ENCODE measurements at regions of chr9 and their contacts with region 1.

Region 1: DNA sequence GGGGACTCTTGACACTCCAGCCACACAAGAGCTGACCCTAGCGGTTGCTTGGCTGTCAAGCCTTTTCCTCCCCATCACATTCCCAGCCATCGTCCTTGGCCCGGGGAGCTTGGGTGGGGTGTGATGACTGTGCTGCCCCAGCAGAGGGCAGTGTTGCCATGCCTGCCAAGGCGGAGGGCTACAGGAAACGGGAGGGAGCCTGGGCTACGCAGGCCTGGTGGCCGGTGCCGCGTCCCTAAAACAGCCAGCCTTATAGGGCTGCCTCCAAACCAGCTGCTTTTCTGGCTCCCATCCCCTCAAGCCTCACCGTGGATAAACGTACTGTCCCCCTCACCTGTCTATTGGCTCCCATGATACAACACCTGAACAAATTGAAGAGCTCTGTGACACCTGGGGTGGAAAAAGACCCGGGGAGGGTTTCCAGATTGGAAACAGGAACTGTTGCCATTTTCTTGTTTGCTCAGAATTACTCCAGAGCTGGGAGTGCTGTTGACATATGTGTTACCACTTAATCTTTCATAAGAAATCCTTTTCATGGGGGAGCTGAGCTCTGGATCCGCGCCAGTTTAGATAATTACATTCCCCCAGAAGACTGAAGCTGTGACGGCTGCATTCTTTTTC is 72.8 kb upstream of the ASTN2 start:
- H3K4me3 ChIP-seq: no peak overlapping the region
- H3K27ac ChIP-seq: no peak overlapping the region
- H3K4me1 ChIP-seq: 0 out of 2 replicates have a peak, but pooled peaks cover 2% of the 10 kb centered on the region
- CTCF ChIP-seq: peak; percentile 63

Region 2: DNA sequence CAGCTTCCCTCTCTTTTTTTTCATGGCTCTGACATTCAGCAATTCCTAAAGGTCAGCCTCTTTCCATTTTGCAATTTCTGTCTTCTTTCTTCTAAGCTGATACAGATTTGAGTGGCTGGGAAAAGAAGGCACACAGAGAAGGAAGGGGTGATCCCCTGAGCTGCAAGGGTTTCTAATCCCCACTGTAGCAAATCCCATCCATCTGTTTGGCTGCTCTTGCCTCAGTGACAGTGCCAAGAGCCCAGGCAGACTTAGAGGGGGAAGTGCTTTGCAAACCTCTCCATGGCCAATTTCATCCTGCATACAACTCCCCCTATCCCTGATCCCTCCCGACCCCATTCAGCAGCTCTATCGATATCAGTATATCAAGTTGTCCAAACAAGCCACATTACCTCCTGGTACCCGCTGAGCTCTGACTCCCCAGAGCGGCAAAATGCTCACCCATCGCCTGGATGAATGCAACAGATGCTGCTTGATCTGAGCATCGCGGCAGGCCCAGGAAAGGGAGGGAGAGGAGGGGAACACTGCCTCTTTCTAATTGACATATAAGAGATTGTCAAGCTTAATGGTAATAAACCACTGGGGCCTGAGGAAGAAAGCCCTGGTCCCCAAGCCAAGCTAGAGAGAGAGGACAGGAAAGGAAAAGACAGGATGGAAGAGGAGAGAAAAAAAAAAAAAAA is 341.7 kb before region 1 on chr9:
- CTCF ChIA-PET with region 1: no interaction called
- POLR2A ChIA-PET with region 1: no interaction called
- H3K4me3 ChIP-seq: no peak overlapping the region
- H3K27ac ChIP-seq: no peak overlapping the region
- H3K4me1 ChIP-seq: no peaks in the 10 kb centered on the region
- CTCF ChIP-seq: no peak

Region 3: GRCh38 chr9:117425566-117425965 is 62.1 kb before region 1 on chr9:
- CTCF ChIA-PET with region 1: no interaction called
- POLR2A ChIA-PET with region 1: no interaction called
- H3K4me3 ChIP-seq: no peak overlapping the region
- H3K27ac ChIP-seq: no peak overlapping the region
- H3K4me1 ChIP-seq: no peaks in the 10 kb centered on the region
- CTCF ChIP-seq: no peak

Region 4: DNA sequence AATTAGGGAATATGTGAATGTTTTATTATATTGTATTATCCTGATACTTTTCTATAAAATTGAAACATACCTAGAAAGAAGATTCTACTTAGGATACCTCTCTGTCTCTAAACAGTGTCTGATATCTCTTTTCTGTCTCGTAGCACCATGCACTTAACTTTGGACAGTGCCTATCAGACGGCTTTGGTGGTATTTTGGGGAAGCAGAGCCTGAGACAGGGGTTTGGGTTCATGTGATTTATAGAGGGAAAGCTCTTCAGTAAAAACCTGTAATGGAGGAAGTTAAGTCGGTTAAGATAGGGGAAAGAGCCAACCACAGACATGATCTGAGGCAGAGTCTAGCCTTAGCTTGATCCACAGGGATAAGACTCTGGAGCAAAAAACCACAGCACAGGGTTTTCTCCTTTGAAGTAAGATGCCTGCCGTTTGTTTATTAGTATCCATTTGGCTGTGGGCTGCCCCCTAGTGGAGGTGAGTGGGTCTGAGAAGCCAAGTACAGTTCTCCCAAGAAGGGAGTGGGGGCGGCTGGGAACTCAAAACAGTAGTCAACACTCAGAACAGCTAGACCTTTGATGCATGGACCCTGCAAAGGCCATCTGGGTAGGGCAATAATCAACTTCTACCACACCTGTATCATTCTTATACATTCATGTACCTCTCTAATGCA is 68.4 kb after region 1 on chr9:
- CTCF ChIA-PET with region 1: interaction called, 16 read pairs
- POLR2A ChIA-PET with region 1: no interaction called
- H3K4me3 ChIP-seq: no peak overlapping the region
- H3K27ac ChIP-seq: no peak overlapping the region
- H3K4me1 ChIP-seq: no peaks in the 10 kb centered on the region
- CTCF ChIP-seq: no peak

Region 5: DNA sequence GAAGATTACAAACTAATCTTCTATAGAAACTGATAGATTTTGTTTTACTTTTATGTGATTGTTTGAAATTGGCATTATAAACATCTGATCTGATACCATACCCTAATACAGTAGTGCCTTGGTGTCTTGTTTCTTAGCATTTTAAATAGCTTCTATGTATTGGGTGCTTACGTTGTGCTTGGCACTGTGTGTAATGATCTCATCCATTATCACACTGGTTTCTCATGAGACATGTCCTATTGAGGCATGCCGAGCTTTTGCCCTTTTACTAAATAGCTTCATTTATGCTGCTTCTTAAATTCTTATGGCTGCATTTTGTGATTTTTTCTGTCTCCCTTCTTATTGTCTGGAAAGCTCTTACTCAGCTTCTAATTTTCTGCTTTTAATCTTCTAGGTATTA is 168.3 kb after region 1 on chr9:
- CTCF ChIA-PET with region 1: no interaction called
- POLR2A ChIA-PET with region 1: no interaction called
- H3K4me3 ChIP-seq: no peak overlapping the region
- H3K27ac ChIP-seq: no peak overlapping the region
- H3K4me1 ChIP-seq: no peaks in the 10 kb centered on the region
- CTCF ChIP-seq: no peak

Region 6: GRCh38 chr9:117682955-117683710 is 195.5 kb after region 1 on chr9:
- CTCF ChIA-PET with region 1: no interaction called
- POLR2A ChIA-PET with region 1: no interaction called
- H3K4me3 ChIP-seq: no peak overlapping the region
- H3K27ac ChIP-seq: no peak overlapping the region
- H3K4me1 ChIP-seq: no peaks in the 10 kb centered on the region
- CTCF ChIP-seq: no peak

Measured in HEK293 (cell line).